Activated naive CD4-positive, alpha-beta T cell treated with anti-CD3 and anti-CD28 coated beads for 36 hours (primary cell): ENCODE measurements at regions of chr15 and their contacts with region 1.

Region 1: GRCh38 chr15:55993111-55993803 is at the start of gene NEDD4:
- DNase-seq: peak; percentile 85
- H3K4me3 Mint-ChIP-seq: peak within 1 kb of the TSS; percentile 89
- H3K27ac Mint-ChIP-seq: peak within 1 kb of the TSS; percentile 80
- H3K4me1 Mint-ChIP-seq: peaks cover 30% of the 10 kb centered on the region
- H3K27me3 Mint-ChIP-seq: peaks cover 8% of the 10 kb centered on the region
- total RNA-seq, gene NEDD4: 29.1 to 32.2 TPM

Region 2: GRCh38 chr15:56040081-56041035 is 47.1 kb after region 1 on chr15:
- CTCF ChIA-PET with region 1: interaction called, 3 read pairs
- intact Hi-C with region 1: loop called (anchors 1 kb)
- DNase-seq: peak; percentile 73
- H3K4me3 Mint-ChIP-seq: no peak overlapping the region
- H3K27ac Mint-ChIP-seq: peak overlapping the region; percentile 79
- H3K4me1 Mint-ChIP-seq: peaks cover 64% of the 10 kb centered on the region
- H3K27me3 Mint-ChIP-seq: no peaks in the 10 kb centered on the region

Region 3: DNA sequence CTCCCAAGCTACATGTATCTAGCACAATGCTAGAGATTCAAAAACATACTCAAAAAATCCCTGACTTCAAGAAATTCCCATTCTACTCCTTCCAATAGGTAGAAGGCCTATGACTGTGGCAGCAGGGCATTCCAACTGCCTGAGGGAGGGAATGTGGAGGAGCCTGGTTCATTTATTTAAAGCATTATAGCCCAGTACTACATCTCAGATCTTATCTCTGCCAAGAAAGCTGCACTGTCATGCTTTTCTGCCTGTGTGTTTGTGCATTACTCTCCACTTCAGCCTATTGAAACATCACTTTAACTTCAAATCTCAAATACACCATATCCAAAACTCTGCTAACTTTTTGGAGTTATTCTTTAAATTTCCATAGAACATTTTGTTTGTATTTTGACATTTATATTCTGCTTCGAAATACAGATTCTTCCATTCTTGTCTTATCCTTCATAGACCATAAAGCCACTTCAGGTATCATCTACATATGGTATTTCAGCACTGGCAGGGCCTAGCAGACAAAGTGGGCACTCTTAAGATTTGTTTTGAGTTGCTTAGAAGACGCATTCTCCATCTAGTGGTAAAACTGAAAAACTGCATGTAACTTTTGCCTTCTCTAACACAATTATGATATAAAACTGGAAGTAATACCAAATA is 59.3 kb after region 1 on chr15:
- CTCF ChIA-PET with region 1: interaction called, 3 read pairs
- intact Hi-C with region 1: loop called (anchors 1 kb)
- DNase-seq: peak; percentile 21
- H3K4me3 Mint-ChIP-seq: no peak overlapping the region
- H3K27ac Mint-ChIP-seq: no peak overlapping the region
- H3K4me1 Mint-ChIP-seq: peaks cover 2% of the 10 kb centered on the region
- H3K27me3 Mint-ChIP-seq: no peaks in the 10 kb centered on the region

Region 4: GRCh38 chr15:56307126-56307525 is 313.9 kb after region 1 on chr15:
- CTCF ChIA-PET with region 1: no interaction called
- intact Hi-C with region 1: no loop called
- DNase-seq: no peak
- H3K4me3 Mint-ChIP-seq: no peak overlapping the region
- H3K27ac Mint-ChIP-seq: no peak overlapping the region
- H3K4me1 Mint-ChIP-seq: no peaks in the 10 kb centered on the region
- H3K27me3 Mint-ChIP-seq: no peaks in the 10 kb centered on the region

Region 5: DNA sequence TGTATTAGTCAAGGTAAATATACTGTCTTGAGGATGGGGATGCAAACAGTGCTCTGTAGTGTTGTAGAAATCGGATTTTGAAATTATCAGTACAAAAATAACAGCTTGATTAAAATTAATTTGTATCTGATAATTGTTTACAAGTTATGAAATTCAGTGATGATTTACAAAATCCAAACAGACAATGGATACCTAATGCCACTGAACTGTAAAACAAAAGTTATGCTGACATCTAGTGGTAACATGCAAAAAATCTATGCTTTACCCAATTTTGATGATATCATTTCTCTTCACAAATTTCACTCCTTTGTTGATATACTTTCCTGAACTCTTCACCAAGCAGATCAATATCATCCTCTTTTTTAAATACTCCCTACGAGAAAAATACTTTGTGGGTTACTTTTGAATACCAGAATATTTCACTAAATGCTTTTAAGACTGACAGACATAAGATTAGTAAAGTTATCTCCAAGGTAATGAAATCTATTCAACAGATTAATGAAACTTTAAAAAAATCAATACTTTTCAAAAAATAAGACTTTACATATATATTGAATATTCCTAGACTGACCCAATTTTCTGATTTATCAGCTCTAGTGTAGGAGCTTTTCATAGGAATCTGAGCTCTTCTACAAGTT is 435.7 kb after region 1 on chr15:
- CTCF ChIA-PET with region 1: no interaction called
- intact Hi-C with region 1: loop called (anchors 10 kb)
- DNase-seq: no peak
- H3K4me3 Mint-ChIP-seq: no peak overlapping the region
- H3K27ac Mint-ChIP-seq: no peak overlapping the region
- H3K4me1 Mint-ChIP-seq: no peaks in the 10 kb centered on the region
- H3K27me3 Mint-ChIP-seq: peaks cover 5% of the 10 kb centered on the region